ENCODE measurements at regions of chr5 and their contacts with region 1.

Region 1: DNA sequence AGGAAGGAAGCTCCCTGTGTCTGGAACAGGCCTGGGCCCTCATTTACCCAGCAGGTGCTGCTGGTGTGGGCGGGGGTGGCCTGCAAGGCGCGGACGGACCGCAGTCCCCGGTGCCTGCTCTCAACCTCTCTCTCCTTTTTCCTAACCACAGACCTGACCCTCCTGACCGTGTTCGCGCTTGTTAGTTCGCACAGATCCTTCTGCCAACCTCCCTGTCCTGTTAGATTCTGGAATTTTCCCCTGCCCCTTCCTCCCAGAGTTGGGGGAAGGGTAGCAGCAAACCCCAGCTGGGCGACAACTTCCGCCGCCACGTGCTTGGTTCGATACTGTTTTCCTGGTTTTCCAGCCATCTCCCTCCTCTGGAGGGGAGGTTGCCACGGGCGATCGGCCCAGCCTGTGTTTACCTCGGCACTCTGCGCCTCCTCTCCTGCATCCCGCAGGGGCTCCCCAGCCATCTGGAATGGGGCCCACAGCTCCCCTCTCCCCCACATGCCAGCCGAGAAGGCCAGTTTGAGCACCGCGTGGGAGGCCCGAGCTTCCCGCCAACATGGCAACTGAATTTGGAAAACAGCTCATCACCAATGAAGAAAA is 70.8 kb upstream of the UNC5A start:
- DNase-seq: peak in 7 of 10 donors; percentile 10 to 88 (median 42)
- H3K4me3 ChIP-seq: no peak overlapping the region
- H3K27ac ChIP-seq: peak overlapping the region in 39 of 59 donors; percentile 0 to 94 (median 56)
- H3K27me3 ChIP-seq: peaks cover 0 to 30% (median 3%) of the 10 kb centered on the region in 45 donors
- CTCF ChIP-seq: no peak

Region 2: DNA sequence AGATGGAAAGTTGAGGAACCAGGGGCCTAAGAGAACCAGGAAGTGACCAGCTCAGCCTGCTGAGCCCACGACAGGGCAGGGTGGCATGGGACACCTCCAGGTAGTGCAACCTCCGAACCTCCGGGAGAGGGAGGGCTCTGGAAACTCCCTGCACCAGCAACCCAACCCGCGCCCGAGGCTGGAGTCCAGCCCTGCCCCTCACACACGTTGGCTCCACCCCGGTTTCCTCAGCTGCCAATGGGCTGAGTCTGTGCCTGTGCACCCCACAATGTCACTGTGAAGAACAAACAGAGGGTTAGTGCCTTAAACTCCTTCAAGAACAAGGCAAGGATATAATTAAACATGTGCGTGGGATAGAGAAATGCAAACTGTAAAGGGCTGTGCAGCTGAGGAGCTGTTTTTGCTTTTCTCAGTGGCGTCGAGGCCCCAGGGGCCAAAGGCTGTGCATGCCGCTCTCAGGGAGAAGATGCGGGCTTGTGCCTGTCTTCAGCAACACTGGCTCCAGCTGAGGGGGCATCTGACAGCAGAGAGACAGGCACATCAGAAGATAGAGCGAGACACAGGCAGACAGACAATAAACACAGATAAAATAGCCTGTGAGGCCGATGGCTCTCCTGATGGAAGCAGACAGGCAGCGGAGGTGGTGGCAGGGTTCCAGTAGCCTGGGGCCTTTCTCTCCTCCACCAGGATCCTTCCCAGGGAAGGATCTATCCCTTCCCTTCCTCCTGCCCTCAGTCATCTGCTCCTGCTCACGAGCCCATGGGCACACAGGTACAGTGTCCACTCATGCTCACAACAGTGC is 54.0 kb after region 1 on chr5:
- intact Hi-C with region 1: loop called (anchors 5 to 10 kb)
- DNase-seq: peak in 8 of 10 donors; percentile 59 to 79 (median 75)
- H3K4me3 ChIP-seq: peak overlapping the region in 29 of 59 donors; percentile 3 to 49 (median 32)
- H3K27ac ChIP-seq: peak overlapping the region in 42 of 59 donors; percentile 0 to 79 (median 46)
- H3K27me3 ChIP-seq: peaks cover 0 to 44% (median 4%) of the 10 kb centered on the region in 45 donors
- CTCF ChIP-seq: no peak

Region 3: GRCh38 chr5:176810687-176811501 is 71.3 kb after region 1 on chr5:
- intact Hi-C with region 1: loop called in 1 of 2 experiments (anchors 1 kb)
- DNase-seq: peak in 7 of 10 donors; percentile 69 to 87 (median 72)
- H3K4me3 ChIP-seq: peak overlapping the region; percentile 34 to 74 (median 56)
- H3K27ac ChIP-seq: peak overlapping the region in 54 of 59 donors; percentile 12 to 94 (median 78)
- H3K27me3 ChIP-seq: peaks cover 0 to 43% (median 17%) of the 10 kb centered on the region in 45 donors
- CTCF ChIP-seq: no peak

Region 4: DNA sequence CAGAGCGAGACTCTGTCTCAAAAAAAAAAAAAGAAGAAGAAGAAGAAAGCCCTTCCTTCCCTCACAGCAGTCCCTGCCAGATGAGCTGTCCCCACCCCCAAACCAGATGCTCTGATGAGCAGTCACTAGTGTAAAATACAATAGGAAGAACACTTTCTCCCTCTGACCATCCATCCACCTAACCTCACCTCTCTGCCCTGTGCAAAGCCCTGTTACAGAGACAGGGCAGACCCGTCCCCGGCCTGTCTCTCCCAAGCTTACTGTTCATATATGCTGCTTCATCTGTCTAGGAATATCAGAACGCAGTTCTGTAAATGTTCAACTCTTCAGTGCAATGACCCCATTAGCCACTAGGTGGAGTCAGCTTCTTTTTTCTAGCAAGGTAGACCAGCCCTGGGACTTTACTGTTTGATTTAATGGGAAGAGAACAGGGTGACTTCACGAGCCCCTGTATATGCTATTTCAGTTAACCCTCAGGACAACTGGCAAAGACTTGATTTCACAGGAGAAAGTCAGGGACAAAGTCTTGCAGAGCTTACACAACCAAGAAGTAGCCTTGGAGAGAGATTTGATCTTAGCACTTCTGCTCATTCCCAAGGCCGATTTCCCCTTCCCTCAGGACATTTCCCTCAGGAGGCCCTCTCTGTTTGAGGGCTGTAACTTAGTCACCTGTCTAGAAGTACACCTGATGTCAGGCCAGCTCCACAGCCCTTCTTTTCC is 332.3 kb after region 1 on chr5:
- intact Hi-C with region 1: no loop called
- DNase-seq: peak in 5 of 10 donors; percentile 42 to 84 (median 66)
- H3K4me3 ChIP-seq: peak overlapping the region in 20 of 59 donors; percentile 2 to 47 (median 22)
- H3K27ac ChIP-seq: peak overlapping the region in 12 of 59 donors; percentile 4 to 71 (median 42)
- H3K27me3 ChIP-seq: no peaks in the 10 kb centered on the region
- CTCF ChIP-seq: peak; percentile 74 to 94 (median 88)

Measured in dorsolateral prefrontal cortex (tissue), 120 donors.